Heart left ventricle (tissue), 16 donors: ENCODE measurements at regions of chr1 and their contacts with region 1.

Region 1: GRCh38 chr1:200242110-200243041 is 167.5 kb downstream of the ZNF281 start:
- DNase-seq: peak in 3 of 5 donors; percentile 21 to 65 (median 50)
- ATAC-seq: peak; percentile 83 to 93 (median 88)
- H3K4me3 ChIP-seq: peak overlapping the region in 7 of 12 donors; percentile 2 to 34 (median 19)
- H3K27ac ChIP-seq: peak overlapping the region in 11 of 12 donors; percentile 30 to 62 (median 51)
- H3K4me1 ChIP-seq: peaks cover 0 to 31% (median 10%) of the 10 kb centered on the region in 12 donors
- H3K27me3 ChIP-seq: peaks cover 0 to 5% (median 0%) of the 10 kb centered on the region in 9 donors
- CTCF ChIP-seq: no peak
- POLR2A ChIP-seq: no peak

Region 2: GRCh38 chr1:200075938-200076550 is 166.3 kb before region 1 on chr1:
- intact Hi-C with region 1: loop called in 1 of 10 experiments (anchors 5 kb)
- DNase-seq: peak in 3 of 5 donors; percentile 28 to 55 (median 41)
- ATAC-seq: peak; percentile 47 to 88 (median 82)
- H3K4me3 ChIP-seq: peak overlapping the region in 3 of 12 donors; percentile 4 to 21 (median 14)
- H3K27ac ChIP-seq: peak overlapping the region in 7 of 12 donors; percentile 14 to 38 (median 27)
- H3K4me1 ChIP-seq: peaks cover 0 to 32% (median 19%) of the 10 kb centered on the region in 12 donors
- H3K27me3 ChIP-seq: peaks cover 0 to 7% (median 0%) of the 10 kb centered on the region in 9 donors
- CTCF ChIP-seq: no peak
- POLR2A ChIP-seq: no peak